ENCODE measurements at regions of chr19 and their contacts with region 1.

Region 1: DNA sequence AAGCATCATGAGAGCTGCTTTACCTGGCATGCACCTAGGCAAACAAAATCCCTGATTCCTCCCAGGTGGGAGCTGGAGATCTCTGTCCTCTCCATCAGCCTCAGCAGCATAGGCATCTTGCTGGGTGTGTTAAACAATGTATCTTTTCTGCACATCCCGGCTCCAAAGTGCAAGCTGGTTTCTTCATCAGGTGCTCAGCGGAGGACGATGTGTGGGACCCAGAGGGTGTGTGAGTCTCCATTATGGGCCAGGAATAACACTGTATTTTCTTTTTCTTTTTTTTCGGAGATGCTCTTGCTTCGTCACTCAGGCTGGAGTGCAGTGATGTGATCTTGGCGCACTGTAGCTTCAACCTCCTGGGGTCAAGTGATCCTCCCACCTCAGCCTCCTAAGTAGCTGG is 9.9 kb downstream of the CNFN start:
- DNase-seq: no peak
- H3K4me3 ChIP-seq: no peak overlapping the region
- H3K27ac ChIP-seq: no peak overlapping the region
- H3K4me1 ChIP-seq: no peaks in the 10 kb centered on the region
- H3K27me3 ChIP-seq: peaks cover 0 to 10% of the 10 kb centered on the region in 2 donors
- CTCF ChIP-seq: no peak
- POLR2A ChIP-seq: no peak

Region 2: GRCh38 chr19:42313096-42313839 is 66.9 kb before region 1 on chr19 and contains the start of gene TMEM145:
- intact Hi-C with region 1: loop called (anchors 2 kb)
- DNase-seq: no peak
- H3K4me3 ChIP-seq: peak within 1 kb of the TSS; percentile 21 to 64 (median 55)
- H3K27ac ChIP-seq: no peak within 1 kb of the TSS
- H3K4me1 ChIP-seq: no peaks in the 10 kb centered on the region
- H3K27me3 ChIP-seq: no peaks in the 10 kb centered on the region
- CTCF ChIP-seq: peak in 2 of 3 donors; percentile 13 to 17
- POLR2A ChIP-seq: no peak
- total RNA-seq, gene TMEM145: 0.33 to 0.59 TPM in 2 of 3 donors, not detected in the other

Region 3: GRCh38 chr19:42333975-42334696 is 46.0 kb before region 1 on chr19:
- intact Hi-C with region 1: loop called (anchors 2 kb)
- DNase-seq: no peak
- H3K4me3 ChIP-seq: no peak overlapping the region
- H3K27ac ChIP-seq: no peak overlapping the region
- H3K4me1 ChIP-seq: no peaks in the 10 kb centered on the region
- H3K27me3 ChIP-seq: no peaks in the 10 kb centered on the region
- CTCF ChIP-seq: no peak
- POLR2A ChIP-seq: no peak